CD8-positive, alpha-beta T cell (primary cell): ENCODE measurements at regions of chr1 and their contacts with region 1.

Region 1: DNA sequence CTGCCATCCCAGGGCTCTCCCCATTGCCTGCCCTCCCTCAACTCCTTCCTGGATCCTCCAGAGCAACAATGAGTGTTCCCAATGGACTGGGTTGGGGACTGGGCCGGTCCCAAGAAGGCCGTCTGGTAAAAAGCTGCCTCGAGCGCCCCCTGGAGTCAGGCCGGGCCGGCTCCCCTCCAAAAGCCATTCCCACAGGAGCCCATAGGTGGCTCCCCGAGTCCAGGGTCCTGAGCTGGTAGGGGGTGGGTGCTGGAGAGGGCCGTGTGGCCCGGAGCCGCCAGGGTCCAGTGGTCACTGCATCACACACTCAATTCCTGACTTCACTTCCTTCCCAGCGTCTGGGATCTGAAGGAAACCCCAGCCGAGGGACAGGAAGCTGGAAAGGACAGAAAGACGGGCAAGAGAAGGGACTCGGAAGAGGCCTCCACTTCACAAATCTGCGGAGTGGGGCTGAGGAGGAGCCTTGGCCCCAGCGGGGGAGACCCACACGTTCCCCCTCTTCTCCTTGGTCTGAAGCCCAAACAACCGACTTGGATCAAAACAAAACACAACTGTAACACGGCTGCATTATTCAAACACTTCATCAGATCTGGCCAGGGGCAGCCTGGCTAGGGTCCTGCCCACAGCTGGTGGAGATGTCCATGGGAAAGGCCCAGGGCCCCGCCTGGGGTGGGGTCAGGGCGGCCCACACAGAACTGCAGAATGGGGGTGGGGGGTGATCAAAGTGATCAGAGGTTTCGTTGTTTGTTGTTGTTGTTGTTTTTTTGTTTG is 10.9 kb upstream of the ALDH4A1 start:
- DNase-seq: peak; percentile 46 to 84 (median 73)
- ATAC-seq: peak; percentile 89
- H3K4me3 ChIP-seq: no peak overlapping the region
- H3K4me3 Mint-ChIP-seq: no peak overlapping the region
- H3K27ac ChIP-seq: no peak overlapping the region
- H3K27ac Mint-ChIP-seq: peak overlapping the region; percentile 22
- H3K4me1 ChIP-seq: peaks cover 5% of the 10 kb centered on the region
- H3K4me1 Mint-ChIP-seq: peaks cover 8% of the 10 kb centered on the region
- H3K27me3 ChIP-seq: no peaks in the 10 kb centered on the region
- H3K27me3 Mint-ChIP-seq: no peaks in the 10 kb centered on the region
- CTCF ChIP-seq: peak; percentile 92

Region 2: DNA sequence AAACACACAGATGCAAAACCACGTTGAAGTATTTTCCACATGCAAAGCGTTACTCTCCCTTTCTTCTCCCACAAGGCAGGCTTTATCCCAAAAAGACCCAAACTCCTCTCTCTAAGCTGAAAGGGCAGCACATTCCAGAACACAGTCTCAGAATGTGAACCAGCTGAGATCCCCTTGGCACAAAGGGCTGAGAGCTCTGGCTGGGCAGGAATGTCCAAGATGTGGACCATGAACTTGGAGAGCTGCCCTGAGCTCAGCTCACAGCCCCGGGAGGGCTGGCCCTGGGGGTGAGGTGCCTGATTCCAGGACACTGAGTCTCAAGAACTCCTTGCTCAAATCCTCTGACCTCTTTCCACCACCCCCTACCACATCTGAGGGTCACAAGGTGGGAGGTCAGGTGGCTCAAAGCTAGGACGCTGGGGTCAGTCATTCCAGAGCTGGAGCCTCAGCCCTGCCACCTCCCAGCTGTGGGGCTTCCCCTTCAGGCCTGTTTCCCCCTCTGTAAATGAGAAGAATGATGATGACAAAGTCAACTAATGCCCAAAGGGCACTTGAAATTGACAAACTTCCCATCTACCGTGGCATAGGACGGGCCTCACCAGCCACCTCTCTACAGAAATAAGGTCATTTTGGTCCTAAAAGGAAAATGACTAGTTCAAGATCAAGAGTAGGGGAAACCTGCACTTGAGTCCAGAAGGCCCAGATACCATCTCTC is 22.4 kb before region 1 on chr1:
- CTCF ChIA-PET with region 1: interaction called, 116 read pairs
- POLR2A ChIA-PET with region 1: no interaction called
- intact Hi-C with region 1: no loop called
- DNase-seq: no peak
- ATAC-seq: no peak
- H3K4me3 ChIP-seq: no peak overlapping the region
- H3K4me3 Mint-ChIP-seq: no peak overlapping the region
- H3K27ac ChIP-seq: no peak overlapping the region
- H3K27ac Mint-ChIP-seq: no peak overlapping the region
- H3K4me1 ChIP-seq: no peaks in the 10 kb centered on the region
- H3K4me1 Mint-ChIP-seq: no peaks in the 10 kb centered on the region
- H3K27me3 ChIP-seq: no peaks in the 10 kb centered on the region
- H3K27me3 Mint-ChIP-seq: no peaks in the 10 kb centered on the region
- CTCF ChIP-seq: no peak

Region 3: DNA sequence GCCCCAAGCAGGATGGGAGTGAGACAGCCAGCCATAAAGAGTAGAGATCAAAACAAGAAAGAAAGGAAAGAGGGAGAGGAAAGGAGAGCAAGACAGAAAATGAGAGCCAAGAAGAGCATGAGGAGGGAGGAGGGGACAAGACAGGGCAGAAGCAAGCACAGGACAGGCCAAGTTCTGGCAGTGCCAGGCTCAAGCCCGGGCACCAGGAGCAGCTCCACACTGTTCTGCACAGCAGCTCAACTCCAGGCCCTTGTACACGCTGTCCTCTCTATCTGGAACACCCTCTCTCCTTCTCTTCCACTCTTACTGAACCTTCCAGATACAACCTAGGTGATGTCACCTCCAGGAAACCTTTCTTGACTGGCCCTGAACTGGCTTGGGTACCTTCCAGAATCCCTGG is 31.6 kb after region 1 on chr1:
- CTCF ChIA-PET with region 1: interaction called, 14 read pairs
- POLR2A ChIA-PET with region 1: no interaction called
- intact Hi-C with region 1: no loop called
- DNase-seq: no peak
- ATAC-seq: no peak
- H3K4me3 ChIP-seq: no peak overlapping the region
- H3K4me3 Mint-ChIP-seq: no peak overlapping the region
- H3K27ac ChIP-seq: no peak overlapping the region
- H3K27ac Mint-ChIP-seq: no peak overlapping the region
- H3K4me1 ChIP-seq: peaks cover 82% of the 10 kb centered on the region
- H3K4me1 Mint-ChIP-seq: peaks cover 86% of the 10 kb centered on the region
- H3K27me3 ChIP-seq: no peaks in the 10 kb centered on the region
- H3K27me3 Mint-ChIP-seq: no peaks in the 10 kb centered on the region
- CTCF ChIP-seq: no peak

Region 4: GRCh38 chr1:18956369-18957135 is 43.3 kb after region 1 on chr1 and contains the start of gene IFFO2:
- CTCF ChIA-PET with region 1: interaction called, 425 read pairs
- POLR2A ChIA-PET with region 1: interaction called, 5 read pairs
- intact Hi-C with region 1: no loop called
- DNase-seq: peak; percentile 96 to 100 (median 98)
- ATAC-seq: peak; percentile 82
- H3K4me3 ChIP-seq: peak within 1 kb of the TSS; percentile 66 to 80
- H3K4me3 Mint-ChIP-seq: peak within 1 kb of the TSS; percentile 96
- H3K27ac ChIP-seq: peak within 1 kb of the TSS; percentile 36 to 52
- H3K27ac Mint-ChIP-seq: peak within 1 kb of the TSS; percentile 97
- H3K4me1 ChIP-seq: peaks cover 57% of the 10 kb centered on the region
- H3K4me1 Mint-ChIP-seq: peaks cover 59% of the 10 kb centered on the region
- H3K27me3 ChIP-seq: peaks cover 0 to 2% of the 10 kb centered on the region in 2 experiments
- H3K27me3 Mint-ChIP-seq: no peaks in the 10 kb centered on the region
- CTCF ChIP-seq: no peak
- total RNA-seq, gene IFFO2: 92.6 to 107 TPM

Region 5: DNA sequence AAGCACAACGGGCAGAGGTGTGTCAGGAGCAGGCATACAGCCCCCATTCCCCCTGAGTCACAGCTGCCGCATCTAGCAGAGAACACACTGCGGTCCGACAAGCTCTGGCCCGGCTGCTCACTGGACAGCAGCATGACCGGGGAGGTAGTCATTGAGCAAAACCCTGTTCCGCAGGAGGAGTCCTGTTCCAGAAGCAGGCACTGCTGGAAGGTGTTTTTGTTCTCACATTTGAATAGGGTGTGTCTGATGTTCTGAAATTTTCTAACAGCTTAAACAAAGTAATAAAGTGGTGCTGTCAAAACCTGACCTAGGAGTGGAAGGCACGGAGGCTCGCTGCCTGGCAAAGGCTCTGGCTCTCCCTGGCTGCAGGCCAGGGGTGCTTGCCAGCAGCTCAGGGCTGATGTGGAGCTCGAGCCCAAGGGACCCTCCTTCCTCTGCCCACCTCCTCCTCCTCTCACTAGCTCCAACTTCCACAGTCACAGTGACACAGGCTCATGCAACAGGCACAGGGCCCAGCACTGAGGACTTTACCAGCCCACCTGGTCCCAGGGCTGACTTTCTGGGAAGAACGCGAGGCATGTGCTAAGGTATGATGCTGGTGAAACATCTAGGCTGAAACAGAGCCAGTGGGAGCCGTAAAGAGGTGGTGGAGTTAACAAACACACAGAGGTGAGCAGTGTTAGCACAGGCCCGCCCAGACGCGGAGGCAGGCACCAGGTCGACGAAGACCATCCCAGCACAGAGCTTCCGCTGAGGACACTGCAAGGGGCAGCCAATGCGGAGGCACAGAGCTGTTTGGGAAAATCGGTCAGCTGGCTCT is 161.9 kb after region 1 on chr1:
- CTCF ChIA-PET with region 1: interaction called, 53 read pairs
- POLR2A ChIA-PET with region 1: no interaction called
- intact Hi-C with region 1: no loop called
- DNase-seq: peak in 1 of 9 experiments; percentile 23
- ATAC-seq: peak; percentile 24
- H3K4me3 ChIP-seq: peak overlapping the region; percentile 16 to 21
- H3K4me3 Mint-ChIP-seq: peak overlapping the region; percentile 56
- H3K27ac ChIP-seq: peak overlapping the region in 1 of 2 experiments; percentile 52
- H3K27ac Mint-ChIP-seq: peak overlapping the region; percentile 69
- H3K4me1 ChIP-seq: peaks cover 46% of the 10 kb centered on the region
- H3K4me1 Mint-ChIP-seq: peaks cover 41% of the 10 kb centered on the region
- H3K27me3 ChIP-seq: no peaks in the 10 kb centered on the region
- H3K27me3 Mint-ChIP-seq: no peaks in the 10 kb centered on the region
- CTCF ChIP-seq: no peak